Mucosa of descending colon (tissue), 3 donors: ENCODE measurements at regions of chr2 and their contacts with region 1.

Region 1: DNA sequence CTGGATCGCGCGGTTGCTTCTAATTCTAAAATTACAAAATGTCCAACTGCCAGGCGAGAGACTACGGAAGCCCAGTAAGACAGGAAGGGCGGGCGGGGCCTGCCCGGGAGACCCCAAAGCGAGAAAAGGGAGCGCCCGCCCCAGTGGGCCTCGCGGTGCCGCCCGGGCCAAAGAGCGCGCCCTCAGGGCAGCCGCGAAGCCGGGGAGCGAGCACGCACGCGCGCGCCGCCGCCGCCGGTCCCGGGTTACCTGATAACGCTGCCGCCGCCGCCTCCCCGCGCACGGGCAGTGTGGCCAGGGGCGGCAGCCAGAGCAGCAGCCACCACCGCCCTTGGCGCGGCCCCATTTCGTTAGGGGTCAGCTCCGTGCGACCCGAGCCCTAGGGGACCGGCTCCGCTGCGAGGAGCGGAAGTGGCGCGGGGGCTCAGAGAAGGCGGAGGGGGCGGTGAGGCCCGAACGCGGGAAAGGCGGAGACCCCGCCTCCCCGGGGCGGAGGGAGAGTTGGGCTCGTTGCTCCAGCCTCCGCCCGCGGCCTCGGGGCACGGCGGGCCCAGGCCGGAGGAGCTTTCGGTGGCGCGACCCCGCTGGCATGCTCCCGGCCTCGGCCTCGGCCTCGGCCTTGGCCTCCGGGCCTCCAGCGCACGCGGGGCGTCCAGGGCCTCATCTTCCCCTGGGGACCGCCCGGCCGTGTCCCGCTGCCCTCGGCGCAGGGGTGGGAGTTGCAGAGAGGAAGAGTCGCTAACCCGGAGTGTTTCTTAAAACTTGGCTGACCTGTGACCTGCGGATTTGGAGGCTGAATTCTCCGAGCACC is at the start of gene NEMP2:
- DNase-seq: peak; percentile 86 to 90 (median 89)
- ATAC-seq: peak; percentile 94
- H3K4me3 ChIP-seq: peak within 1 kb of the TSS; percentile 76
- H3K4me1 ChIP-seq: no peaks in the 10 kb centered on the region
- CTCF ChIP-seq: no peak
- total RNA-seq, gene NEMP2: 1.7 to 4.1 (median 4.0) TPM

Region 2: GRCh38 chr2:190648289-190649034 is 113.9 kb after region 1 on chr2:
- intact Hi-C with region 1: loop called in 1 of 2 experiments (anchors 10 kb)
- DNase-seq: peak; percentile 86 to 92 (median 90)
- ATAC-seq: peak; percentile 87
- H3K4me3 ChIP-seq: peak overlapping the region; percentile 77
- H3K4me1 ChIP-seq: peaks cover 21% of the 10 kb centered on the region
- CTCF ChIP-seq: no peak